GM12878 (cell line): ENCODE measurements at regions of chr2 and their contacts with region 1.

Region 1: DNA sequence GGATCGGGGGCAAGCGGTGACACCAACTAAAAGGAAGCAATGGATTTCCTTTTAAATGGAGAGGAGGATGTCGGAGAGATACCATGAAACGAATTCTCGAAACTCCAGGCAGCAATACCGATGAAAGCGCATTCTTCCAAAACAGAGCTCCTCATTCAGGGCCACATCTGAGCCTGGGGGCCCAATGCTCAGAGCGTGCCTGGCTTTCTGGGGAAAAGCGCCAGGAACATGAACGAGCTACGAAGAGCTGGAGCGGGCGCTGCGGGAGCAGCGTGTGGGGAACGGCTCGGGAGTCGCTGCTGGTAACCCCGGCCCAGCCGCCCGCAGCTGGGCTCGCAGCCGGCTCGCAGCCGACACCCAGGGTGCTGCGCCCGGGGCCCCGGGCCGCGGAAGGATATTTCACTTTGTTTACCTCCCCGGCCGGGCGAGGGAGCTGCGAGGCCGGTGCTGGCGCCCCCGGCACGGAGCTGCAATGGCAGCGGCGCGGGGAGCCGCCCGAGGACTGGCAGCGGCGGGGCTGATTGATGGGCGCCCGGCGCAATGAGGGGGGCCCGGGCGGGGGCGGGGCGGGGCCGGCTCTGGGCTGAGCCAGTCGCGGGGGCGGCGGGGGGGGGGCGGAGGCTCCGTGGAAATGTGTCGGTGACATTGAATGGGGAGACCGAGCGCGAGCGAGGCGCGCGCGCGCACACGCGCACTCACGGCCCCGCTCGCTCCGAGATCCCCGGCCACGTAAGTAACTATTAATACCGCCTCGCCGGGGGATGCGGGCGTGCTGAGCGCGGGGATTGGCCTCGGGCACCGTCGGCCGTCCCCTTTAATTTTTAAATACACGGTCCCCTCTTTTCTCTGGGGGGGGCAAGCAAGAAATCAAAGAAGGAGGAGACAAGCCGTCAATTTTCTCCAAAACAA is at the start of gene TRIB2:
- DNase-seq: no peak
- ATAC-seq: peak; percentile 85
- H3K4me3 ChIP-seq: peak within 1 kb of the TSS; percentile 87
- H3K27ac ChIP-seq: no peak within 1 kb of the TSS
- H3K4me1 ChIP-seq: peaks cover 3% of the 10 kb centered on the region; the same call in 1 of the 2 replicates
- H3K27me3 ChIP-seq: peaks cover 0 to 18% of the 10 kb centered on the region in 2 experiments; a peak in 3 of 4 replicates
- CTCF ChIP-seq: peak in 2 of 3 experiments; percentile 12 to 35; a peak in 2 of 6 replicates
- EP300 ChIP-seq: no peak
- POLR2A ChIP-seq: peak; percentile 54
- RAD21 ChIP-seq: 0 out of 2 replicates have a peak, but pooled peaks have one; percentile 34
- polyA plus RNA-seq, gene TRIB2: 1.6 to 3.5 TPM

Region 2: GRCh38 chr2:12282780-12283695 is 433.5 kb before region 1 on chr2:
- CTCF ChIA-PET with region 1: interaction called, 3 read pairs
- POLR2A ChIA-PET with region 1: no interaction called
- RAD21 ChIA-PET with region 1: no interaction called
- SMC1A ChIA-PET with region 1: no interaction called
- in situ Hi-C with region 1: no loop called
- intact Hi-C with region 1: loop called (anchors 5 kb)
- DNase-seq: no peak
- ATAC-seq: peak; percentile 95
- H3K4me3 ChIP-seq: 0 out of 2 replicates have a peak overlapping the region, but pooled peaks have one; percentile 22
- H3K27ac ChIP-seq: no peak overlapping the region; the same call in 1 of the 2 replicates
- H3K4me1 ChIP-seq: peaks cover 16% of the 10 kb centered on the region
- H3K27me3 ChIP-seq: no peaks in the 10 kb centered on the region
- CTCF ChIP-seq: no peak
- EP300 ChIP-seq: peak in 1 of 2 experiments; percentile 46; a peak in 1 of 4 replicates
- POLR2A ChIP-seq: no peak
- RAD21 ChIP-seq: no peak

Region 3: GRCh38 chr2:12416600-12416999 is 299.9 kb before region 1 on chr2:
- CTCF ChIA-PET with region 1: interaction called, 3 read pairs
- POLR2A ChIA-PET with region 1: no interaction called
- RAD21 ChIA-PET with region 1: no interaction called
- SMC1A ChIA-PET with region 1: no interaction called
- in situ Hi-C with region 1: no loop called
- intact Hi-C with region 1: loop called (anchors 2 kb)
- DNase-seq: no peak
- ATAC-seq: peak; percentile 14; the same call in 2 of the 3 replicates
- H3K4me3 ChIP-seq: no peak overlapping the region
- H3K27ac ChIP-seq: no peak overlapping the region
- H3K4me1 ChIP-seq: peaks cover 13% of the 10 kb centered on the region; the same call in 1 of the 2 replicates
- H3K27me3 ChIP-seq: no peaks in the 10 kb centered on the region
- CTCF ChIP-seq: peak; percentile 17 to 30 (median 25); a peak in 4 of 6 replicates
- EP300 ChIP-seq: no peak
- POLR2A ChIP-seq: no peak
- RAD21 ChIP-seq: peak; percentile 50

Region 4: DNA sequence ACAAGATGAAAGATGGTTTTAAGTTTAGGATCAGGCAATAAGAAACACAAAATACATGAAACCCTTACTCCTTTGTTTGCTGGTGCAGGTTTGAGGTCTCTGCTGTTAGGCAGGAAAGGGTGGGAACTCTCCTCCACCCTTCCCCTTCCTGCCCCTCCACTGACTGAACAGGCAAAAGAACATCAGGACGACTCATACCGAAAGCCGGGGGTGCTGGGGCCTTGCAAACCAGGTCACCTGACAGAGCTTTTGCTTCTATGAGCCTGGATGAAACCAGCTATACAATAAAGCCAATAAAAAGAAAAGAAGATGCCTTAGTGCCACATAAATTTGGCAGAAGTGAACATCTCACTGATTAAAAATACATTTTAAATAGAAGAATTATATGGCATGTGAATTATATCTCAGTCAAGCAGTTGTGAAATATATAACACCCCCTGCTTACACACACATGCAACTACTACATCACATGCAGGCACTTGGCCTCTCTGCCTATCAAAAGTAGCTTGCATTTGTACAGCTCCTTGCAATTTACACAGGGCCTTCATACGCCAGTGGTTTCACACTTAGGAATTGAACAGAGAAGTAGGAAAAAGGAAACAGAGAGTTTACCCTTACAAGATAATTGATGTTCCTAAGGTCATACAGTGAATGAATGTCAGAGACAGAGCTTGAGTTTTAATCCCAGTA is 214.9 kb before region 1 on chr2:
- CTCF ChIA-PET with region 1: interaction called, 13 read pairs
- POLR2A ChIA-PET with region 1: no interaction called
- RAD21 ChIA-PET with region 1: interaction called, 3 read pairs
- SMC1A ChIA-PET with region 1: interaction called, 4 read pairs
- in situ Hi-C with region 1: no loop called
- intact Hi-C with region 1: loop called (anchors 2 kb)
- DNase-seq: peak; percentile 76
- ATAC-seq: peak; percentile 97
- H3K4me3 ChIP-seq: no peak overlapping the region
- H3K27ac ChIP-seq: peak overlapping the region; percentile 36
- H3K4me1 ChIP-seq: peaks cover 35% of the 10 kb centered on the region
- H3K27me3 ChIP-seq: no peaks in the 10 kb centered on the region
- CTCF ChIP-seq: no peak
- EP300 ChIP-seq: 0 out of 4 replicates have a peak, but pooled peaks of 1 of the 2 experiments have one; percentile 39
- POLR2A ChIP-seq: no peak
- RAD21 ChIP-seq: peak; percentile 25; the same call in 1 of the 2 replicates

Region 5: DNA sequence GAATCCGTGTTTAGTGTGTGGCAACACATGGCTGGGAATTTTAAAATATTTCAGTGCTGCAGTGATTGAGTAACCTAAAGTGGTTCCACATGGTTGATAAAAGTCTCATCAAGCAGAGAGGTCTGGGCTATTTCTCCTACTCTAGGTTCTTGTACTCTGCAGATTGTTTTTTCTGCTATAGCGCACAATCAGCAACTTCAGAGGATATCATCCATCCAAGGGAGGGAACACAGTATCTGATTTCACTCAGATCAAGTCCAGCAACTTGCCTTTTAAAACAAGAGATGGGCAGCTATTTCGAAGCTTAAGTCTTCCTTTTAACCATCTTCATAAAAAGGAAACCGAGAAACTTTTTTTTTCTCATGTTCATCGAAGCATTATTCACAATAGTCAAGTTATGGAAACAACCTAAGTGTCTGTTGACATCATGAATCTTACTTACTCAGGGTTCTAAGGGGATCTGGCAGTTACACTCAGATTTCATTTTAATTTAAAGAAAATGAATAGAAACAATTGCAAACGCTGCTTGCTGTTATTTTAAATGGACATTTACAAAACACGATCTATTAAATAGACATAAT is 172.5 kb before region 1 on chr2:
- CTCF ChIA-PET with region 1: interaction called, 4 read pairs
- POLR2A ChIA-PET with region 1: no interaction called
- RAD21 ChIA-PET with region 1: no interaction called
- SMC1A ChIA-PET with region 1: no interaction called
- in situ Hi-C with region 1: no loop called
- intact Hi-C with region 1: loop called (anchors 5 kb)
- DNase-seq: peak; percentile 32
- ATAC-seq: peak; percentile 94
- H3K4me3 ChIP-seq: no peak overlapping the region
- H3K27ac ChIP-seq: no peak overlapping the region
- H3K4me1 ChIP-seq: peaks cover 5% of the 10 kb centered on the region; the same call in 1 of the 2 replicates
- H3K27me3 ChIP-seq: no peaks in the 10 kb centered on the region
- CTCF ChIP-seq: no peak
- EP300 ChIP-seq: no peak
- POLR2A ChIP-seq: no peak
- RAD21 ChIP-seq: no peak

Region 6: GRCh38 chr2:12931186-12931844 is 214.8 kb after region 1 on chr2:
- CTCF ChIA-PET with region 1: interaction called, 20 read pairs
- POLR2A ChIA-PET with region 1: no interaction called
- RAD21 ChIA-PET with region 1: interaction called, 9 read pairs
- SMC1A ChIA-PET with region 1: interaction called, 12 read pairs
- in situ Hi-C with region 1: no loop called
- intact Hi-C with region 1: loop called (anchors 2 kb)
- DNase-seq: no peak
- ATAC-seq: peak; percentile 81
- H3K4me3 ChIP-seq: no peak overlapping the region
- H3K27ac ChIP-seq: no peak overlapping the region
- H3K4me1 ChIP-seq: no peaks in the 10 kb centered on the region
- H3K27me3 ChIP-seq: no peaks in the 10 kb centered on the region; a peak in 1 of 4 replicates
- CTCF ChIP-seq: peak; percentile 68 to 77 (median 75)
- EP300 ChIP-seq: no peak
- POLR2A ChIP-seq: no peak
- RAD21 ChIP-seq: peak; percentile 59